Common myeloid progenitor, CD34-positive (primary cell): ENCODE measurements at regions of chr2 and their contacts with region 1.

Region 1: DNA sequence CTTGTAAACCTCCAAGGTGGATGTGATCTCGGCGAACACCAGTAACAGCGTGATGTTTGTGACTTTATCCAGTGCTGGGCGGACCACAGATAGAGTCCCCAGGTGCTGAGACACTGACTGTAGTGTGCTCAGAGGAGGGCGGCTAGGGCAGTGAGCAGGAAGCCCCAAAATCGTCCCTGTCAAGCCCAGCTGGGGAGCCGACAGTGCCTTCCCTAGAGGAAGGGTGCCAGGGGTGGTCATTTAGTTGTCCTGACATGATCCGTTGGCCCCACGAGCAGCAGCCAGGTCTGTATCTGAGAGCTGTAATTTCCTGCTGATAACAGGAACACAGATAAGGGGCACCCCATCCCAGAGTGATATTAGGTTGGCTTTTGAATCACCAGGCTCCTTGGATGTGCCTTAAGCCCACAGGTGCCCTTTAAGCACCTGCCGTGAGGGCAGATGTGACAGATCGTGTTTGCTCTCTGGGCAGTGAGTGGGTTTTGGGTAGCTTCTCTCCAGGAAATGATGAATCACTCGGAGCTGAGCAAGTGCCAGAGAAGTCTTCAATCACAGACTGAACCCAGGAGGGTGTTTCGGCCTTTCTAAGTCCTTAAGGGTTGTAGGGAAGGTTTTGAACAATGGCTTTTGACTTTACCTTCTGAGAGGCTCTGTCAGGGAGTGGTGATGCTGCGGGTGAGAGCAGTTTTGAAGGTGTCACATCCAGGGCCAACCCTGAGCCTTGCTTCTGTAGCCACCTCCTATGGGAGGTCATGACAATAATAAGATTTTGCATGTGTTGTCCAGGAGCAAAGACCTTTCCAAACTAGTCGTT is 7.7 kb downstream of the LPIN1 start:
- DNase-seq: peak; percentile 71 to 94 (median 91)
- H3K4me3 ChIP-seq: peak overlapping the region; percentile 3 to 69 (median 56)
- H3K27ac ChIP-seq: peak overlapping the region; percentile 91 to 93
- H3K4me1 ChIP-seq: peaks cover 37 to 93% (median 85%) of the 10 kb centered on the region in 4 experiments
- H3K27me3 ChIP-seq: no peaks in the 10 kb centered on the region

Region 2: GRCh38 chr2:11738589-11739436 is 15.3 kb before region 1 on chr2:
- CTCF ChIA-PET with region 1: interaction called, 80 read pairs
- POLR2A ChIA-PET with region 1: interaction called, 6 read pairs
- DNase-seq: peak; percentile 52 to 64 (median 64)
- H3K4me3 ChIP-seq: no peak overlapping the region
- H3K27ac ChIP-seq: no peak overlapping the region
- H3K4me1 ChIP-seq: peaks cover 0 to 29% (median 13%) of the 10 kb centered on the region in 4 experiments
- H3K27me3 ChIP-seq: no peaks in the 10 kb centered on the region

Region 3: DNA sequence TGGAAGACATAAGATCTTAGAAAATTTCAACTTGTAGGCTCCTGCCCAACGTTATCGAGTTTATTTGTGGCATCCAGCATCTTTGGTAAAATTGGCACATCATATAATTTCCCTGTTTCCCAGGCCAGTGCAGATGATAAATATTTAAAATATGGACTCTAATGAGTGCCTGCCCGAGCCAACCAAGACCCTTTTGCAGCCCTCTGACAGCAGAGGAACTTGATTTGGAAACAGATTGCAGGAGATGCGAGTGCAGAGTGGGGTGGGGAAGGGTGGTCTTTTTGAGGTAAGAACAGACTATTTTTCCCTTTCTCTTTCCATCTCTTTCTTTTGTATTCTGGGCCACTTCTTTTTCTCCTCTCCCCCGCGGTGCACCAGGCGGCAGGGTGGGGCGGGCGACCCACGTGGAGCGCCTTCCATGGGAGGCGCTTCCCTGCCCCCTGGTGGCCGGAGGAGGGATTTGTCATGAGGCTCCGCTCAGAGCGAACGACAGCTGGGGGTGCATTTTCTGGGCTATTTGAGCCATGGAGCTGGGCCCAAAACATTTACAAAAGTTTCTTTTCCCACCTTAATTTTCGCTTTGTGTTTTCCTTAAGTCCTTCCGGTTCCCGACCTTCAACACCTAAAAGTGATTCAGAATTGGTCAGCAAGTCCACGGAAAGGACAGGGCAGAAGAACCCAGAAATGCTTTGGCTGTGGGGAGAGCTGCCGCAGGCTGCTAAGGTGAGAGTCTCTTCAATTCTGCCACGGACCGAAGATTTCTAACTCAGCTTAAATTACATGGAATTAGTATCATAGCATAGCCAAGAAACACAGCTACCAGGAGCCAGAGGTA is 25.0 kb after region 1 on chr2:
- CTCF ChIA-PET with region 1: interaction called, 430 read pairs
- POLR2A ChIA-PET with region 1: interaction called, 13 read pairs
- DNase-seq: peak; percentile 75 to 85 (median 81)
- H3K4me3 ChIP-seq: peak overlapping the region in 3 of 7 experiments; percentile 50 to 69 (median 52)
- H3K27ac ChIP-seq: no peak overlapping the region
- H3K4me1 ChIP-seq: peaks cover 8 to 41% (median 25%) of the 10 kb centered on the region in 4 experiments
- H3K27me3 ChIP-seq: no peaks in the 10 kb centered on the region